HEK293 (cell line): ENCODE measurements at regions of chr17 and their contacts with region 1.

Region 1: GRCh38 chr17:7045909-7046724 is 2.2 kb upstream of the SLC16A11 start:
- H3K4me3 ChIP-seq: peak overlapping the region; percentile 0
- H3K27ac ChIP-seq: peak overlapping the region; percentile 34; the same call in 1 of the 2 replicates
- H3K4me1 ChIP-seq: peaks cover 6% of the 10 kb centered on the region; the same call in 1 of the 2 replicates
- CTCF ChIP-seq: peak; percentile 76

Region 2: DNA sequence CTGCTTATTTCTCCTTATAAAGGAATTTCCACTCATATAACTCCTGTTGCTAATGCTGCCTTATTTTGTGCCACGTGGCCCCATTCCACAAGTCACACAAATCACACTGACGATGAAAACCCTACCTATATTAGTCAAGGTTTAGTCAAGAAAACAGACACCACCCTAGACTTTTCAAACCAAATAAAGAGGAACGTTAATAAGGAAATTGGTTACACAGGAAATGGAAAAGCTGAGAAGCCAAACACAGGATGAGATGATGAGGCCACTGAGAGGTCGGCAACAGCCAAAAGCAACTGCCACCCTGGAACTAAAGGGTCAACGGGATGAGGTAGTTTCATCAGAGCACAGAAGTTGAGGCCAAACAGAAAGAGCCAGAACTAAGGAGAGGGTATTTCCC is 97.6 kb before region 1 on chr17:
- CTCF ChIA-PET with region 1: no interaction called
- POLR2A ChIA-PET with region 1: no interaction called
- H3K4me3 ChIP-seq: no peak overlapping the region
- H3K27ac ChIP-seq: no peak overlapping the region
- H3K4me1 ChIP-seq: no peaks in the 10 kb centered on the region
- CTCF ChIP-seq: no peak

Region 3: DNA sequence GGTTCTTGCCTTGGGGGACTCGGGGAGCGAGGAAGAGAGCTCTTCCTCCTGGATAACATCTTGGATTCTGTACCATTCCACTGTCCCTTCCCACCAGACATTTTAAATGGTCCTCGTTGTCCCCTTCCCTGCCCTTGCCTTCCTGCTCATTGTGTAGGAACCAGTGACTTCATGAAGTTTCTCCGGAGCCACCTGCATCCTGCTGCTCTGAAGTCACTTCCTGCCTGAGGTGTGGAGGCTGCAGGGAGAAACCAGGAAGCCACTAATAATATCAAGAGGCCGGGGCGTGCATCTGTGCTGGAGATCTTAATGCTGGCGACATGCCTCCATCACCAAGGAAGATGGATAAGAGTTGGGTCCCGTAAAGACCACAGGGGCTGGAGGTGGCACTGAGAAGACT is 16.5 kb before region 1 on chr17:
- CTCF ChIA-PET with region 1: interaction called, 13 read pairs
- POLR2A ChIA-PET with region 1: no interaction called
- H3K4me3 ChIP-seq: no peak overlapping the region
- H3K27ac ChIP-seq: no peak overlapping the region
- H3K4me1 ChIP-seq: no peaks in the 10 kb centered on the region
- CTCF ChIP-seq: no peak

Region 4: DNA sequence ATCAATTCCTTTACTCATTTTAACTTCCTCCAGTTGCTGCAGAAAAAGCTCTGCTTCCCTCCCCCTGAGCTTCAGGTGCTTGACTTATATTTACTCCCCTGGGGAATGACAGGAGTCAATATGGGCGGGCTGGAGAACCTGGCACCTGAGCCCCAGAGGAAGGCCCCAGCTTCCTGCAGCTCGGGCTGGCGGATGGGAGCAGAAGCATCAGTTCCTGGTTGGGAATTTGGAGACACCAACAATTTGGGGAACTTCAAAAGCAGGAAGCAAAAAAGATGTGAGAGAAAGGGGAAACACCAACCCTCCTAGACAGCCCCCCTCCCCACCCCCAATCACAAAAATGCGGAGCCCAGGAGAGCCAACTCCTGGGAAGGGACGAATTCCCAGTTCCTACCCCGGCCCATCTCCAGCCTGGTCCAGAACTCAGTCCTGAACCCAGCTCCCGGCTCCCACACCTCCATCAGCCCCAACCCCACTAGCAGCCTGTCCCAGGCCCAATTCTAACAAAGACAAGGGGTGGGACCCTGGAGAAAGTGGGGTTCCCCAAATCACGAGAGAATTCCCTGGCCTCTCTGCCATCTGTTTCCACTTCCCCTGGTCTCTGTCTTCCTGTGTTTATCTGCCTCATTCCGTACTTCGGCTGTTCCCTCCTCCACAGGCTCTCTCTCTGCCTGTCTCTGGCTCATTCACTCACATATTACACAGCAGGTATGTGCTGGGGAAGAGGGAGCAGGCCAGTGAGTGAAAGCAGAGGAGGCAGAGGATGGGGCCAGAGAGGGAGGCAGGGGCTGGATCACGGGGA is 84.7 kb after region 1 on chr17:
- CTCF ChIA-PET with region 1: interaction called, 388 read pairs
- POLR2A ChIA-PET with region 1: interaction called, 10 read pairs
- H3K4me3 ChIP-seq: no peak overlapping the region
- H3K27ac ChIP-seq: no peak overlapping the region
- H3K4me1 ChIP-seq: no peaks in the 10 kb centered on the region
- CTCF ChIP-seq: no peak

Region 5: DNA sequence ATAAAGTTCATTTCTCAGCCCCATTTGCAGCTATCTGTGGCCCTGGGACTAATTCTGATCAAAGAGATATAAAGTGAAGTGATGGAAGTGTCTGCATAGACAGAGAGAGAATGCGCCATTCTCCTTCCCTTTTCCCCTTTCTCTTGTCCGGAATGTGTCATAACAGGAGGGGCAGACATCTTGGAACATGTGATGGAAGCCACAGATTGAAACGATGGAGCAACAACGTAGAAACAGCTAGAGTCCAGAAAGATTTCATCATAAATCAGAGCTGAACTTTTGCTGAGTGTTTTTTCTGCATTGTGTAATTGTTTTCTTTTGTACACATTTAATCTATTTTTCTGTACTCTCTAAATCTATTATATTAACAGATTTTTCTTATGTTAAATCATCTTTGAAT is 121.7 kb after region 1 on chr17:
- CTCF ChIA-PET with region 1: interaction called, 16 read pairs
- POLR2A ChIA-PET with region 1: interaction called, 6 read pairs
- H3K4me3 ChIP-seq: no peak overlapping the region
- H3K27ac ChIP-seq: no peak overlapping the region
- H3K4me1 ChIP-seq: no peaks in the 10 kb centered on the region
- CTCF ChIP-seq: no peak

Region 6: DNA sequence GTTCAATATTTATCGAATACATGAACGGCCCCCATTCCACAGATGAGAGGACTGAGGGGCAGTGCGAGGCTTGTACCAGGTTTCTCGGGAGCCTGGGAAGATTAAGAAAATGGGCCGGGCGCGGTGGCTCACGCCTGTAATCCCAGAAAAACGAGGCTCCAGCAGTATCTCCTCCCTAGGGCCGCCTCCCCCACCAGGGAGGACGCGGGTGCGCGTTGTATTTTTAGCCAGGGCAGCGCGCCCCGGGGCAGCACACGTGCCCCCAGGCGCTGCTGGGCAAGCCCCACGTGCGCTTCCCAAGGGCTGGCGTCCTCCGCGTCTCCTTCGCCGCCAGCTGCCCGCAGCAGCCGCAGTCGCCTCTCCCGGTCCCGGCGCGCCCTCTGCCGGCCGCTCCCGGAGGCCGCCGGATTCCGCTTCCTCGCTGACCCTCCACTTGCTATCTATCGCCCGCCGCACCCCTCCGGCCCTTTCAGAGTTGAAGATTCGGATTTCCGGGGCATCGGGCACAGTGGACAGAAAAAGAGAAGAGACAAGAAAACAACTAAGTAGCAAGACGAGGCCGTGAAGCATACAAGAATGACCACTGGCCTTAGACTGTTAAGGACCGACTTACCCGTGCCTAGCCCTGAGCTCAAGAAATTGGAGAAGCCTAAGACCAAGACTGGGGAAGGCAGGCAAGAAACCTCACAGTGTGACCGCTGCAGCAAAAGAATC is 250.2 kb after region 1 on chr17:
- CTCF ChIA-PET with region 1: interaction called, 24 read pairs
- POLR2A ChIA-PET with region 1: interaction called, 9 read pairs
- H3K4me3 ChIP-seq: no peak overlapping the region
- H3K27ac ChIP-seq: no peak overlapping the region
- H3K4me1 ChIP-seq: peaks cover 6% of the 10 kb centered on the region; the same call in 1 of the 2 replicates
- CTCF ChIP-seq: peak; percentile 96